Right ventricle myocardium inferior (tissue), 1 donor: ENCODE measurements at regions of chr5 and their contacts with region 1.

Region 1: GRCh38 chr5:172902497-172903200 is 56.6 kb upstream of the RPL26L1 start:
- DNase-seq: peak; percentile 85
- ATAC-seq: peak; percentile 73

Region 2: DNA sequence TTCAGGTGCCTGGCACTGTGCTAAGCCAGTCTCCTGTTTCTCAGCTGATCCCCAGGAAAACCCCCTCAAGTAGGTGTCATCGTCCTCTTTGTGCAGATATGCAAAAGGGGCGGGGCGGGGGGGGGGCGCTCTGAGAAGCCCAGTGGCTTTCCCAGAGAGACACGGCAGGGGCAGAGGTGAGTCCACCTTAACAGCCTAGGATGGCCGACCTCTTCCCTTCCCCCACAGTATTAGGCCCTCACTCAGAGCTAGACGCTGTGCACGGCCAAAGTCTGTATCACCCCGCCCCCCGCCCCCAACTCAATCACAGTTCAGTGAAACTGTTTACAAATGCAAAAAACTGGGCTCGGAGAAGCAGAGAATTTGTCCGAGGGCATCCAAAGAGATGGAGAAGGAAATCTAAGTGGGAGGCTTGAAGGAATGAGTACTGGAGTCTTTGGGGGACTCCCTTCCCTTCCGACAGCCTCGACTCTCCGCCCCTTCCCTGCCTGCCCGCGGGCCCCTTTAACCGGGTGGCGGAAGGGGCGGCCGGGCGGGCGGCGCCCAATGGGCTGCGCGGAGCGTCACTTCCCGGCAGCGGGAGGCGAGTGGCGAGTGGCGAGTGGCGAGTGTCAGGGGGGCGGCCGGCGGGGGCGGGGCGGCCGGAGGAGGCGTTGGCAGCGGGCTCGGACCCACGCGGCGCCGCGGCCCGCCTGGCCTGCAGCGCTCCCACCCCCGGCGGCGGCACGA is 68.8 kb before region 1 on chr5 and contains the start of gene ERGIC1:
- intact Hi-C with region 1: loop called (anchors 2 kb)
- DNase-seq: peak; percentile 95
- ATAC-seq: peak; percentile 94
- total RNA-seq, gene ERGIC1: 74.8 TPM

Region 3: GRCh38 chr5:172860520-172861443 is 41.9 kb before region 1 on chr5:
- intact Hi-C with region 1: loop called (anchors 2 kb)
- DNase-seq: peak; percentile 91
- ATAC-seq: peak; percentile 93

Region 4: DNA sequence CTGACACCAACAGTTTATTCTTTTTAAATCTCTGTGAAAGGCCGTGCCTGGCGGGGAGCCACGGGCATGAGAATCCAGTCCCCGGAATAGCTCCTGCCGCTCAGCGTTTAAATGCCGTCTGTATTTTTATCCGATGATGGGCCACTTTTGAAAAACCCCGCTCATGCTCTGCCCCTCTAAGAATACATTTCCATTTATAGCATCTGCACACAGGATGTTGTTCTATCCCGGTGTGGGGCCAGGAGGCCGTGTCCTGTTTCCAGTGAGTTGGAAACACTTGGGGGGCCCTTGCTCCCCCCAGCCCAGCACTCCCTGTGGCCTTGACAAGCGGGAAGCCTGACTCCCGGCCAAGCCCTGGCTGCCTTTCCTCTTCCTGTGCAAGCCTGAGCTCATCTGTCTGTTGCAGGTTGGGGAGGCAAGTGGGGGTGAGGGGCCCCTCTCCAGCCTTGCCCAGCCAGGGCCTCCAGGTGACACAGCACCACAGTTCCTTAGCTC is 29.6 kb before region 1 on chr5:
- intact Hi-C with region 1: loop called (anchors 2 kb)
- DNase-seq: peak; percentile 90
- ATAC-seq: peak; percentile 53